Calu3 (cell line): ENCODE measurements at regions of chr7 and their contacts with region 1.

Region 1: DNA sequence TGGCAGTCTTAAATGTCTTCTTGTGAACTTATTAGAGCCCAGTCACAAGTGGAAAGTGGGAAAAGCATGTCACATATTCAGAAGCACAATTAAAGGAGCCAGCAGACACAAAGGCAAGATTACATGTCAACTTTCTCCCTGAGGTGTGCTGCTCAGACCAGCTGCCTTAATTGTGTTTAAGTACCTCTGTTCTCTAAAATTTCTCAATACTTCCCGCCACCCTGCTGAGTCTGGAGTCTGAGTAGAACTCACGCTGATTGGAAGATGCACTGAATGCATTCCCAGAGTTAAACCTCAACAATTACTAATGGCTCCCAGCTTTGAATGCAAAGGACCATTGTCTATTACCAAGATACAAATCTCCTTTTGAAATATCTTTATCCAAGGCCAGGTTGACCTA is 166.4 kb upstream of the COBL start:
- DNase-seq: no peak
- H3K4me3 Mint-ChIP-seq: no peak overlapping the region
- H3K27ac Mint-ChIP-seq: no peak overlapping the region
- H3K4me1 Mint-ChIP-seq: no peaks in the 10 kb centered on the region
- H3K27me3 Mint-ChIP-seq: peaks cover 9% of the 10 kb centered on the region
- CTCF ChIP-seq: no peak

Region 2: DNA sequence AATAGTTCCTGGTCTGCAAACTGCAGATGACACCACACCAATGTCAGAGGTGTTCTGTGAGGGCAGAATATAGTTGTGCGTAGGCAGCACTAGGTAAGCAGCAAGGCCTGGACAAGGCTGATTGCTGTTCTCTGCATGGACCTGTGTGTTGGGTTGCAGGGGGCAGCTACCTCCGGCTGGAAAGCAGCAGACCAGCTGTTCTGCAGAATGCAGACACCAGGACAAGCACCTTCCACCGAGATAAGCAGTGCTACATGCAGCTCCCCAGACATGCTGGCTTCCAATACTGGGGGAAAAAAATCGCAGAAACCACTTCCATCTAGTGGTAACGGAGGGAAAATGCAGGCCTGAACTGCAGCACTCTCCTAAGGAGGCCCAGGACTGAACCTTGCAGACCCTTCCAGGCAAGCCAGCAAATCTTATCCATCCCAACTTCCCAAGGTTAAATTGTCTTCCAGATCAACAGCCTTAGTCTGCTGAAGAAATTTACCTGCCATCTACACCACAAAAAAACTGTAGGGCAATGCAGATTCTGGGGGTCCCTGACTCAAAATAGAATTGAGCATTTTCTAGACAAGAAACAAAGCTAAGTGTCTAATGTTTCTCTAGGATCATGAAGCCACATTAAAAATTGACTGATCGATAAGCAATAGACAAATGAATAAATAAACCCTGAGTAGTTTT is 115.9 kb before region 1 on chr7:
- CTCF ChIA-PET with region 1: no interaction called
- intact Hi-C with region 1: no loop called
- DNase-seq: peak; percentile 76
- H3K4me3 Mint-ChIP-seq: no peak overlapping the region
- H3K27ac Mint-ChIP-seq: no peak overlapping the region
- H3K4me1 Mint-ChIP-seq: peaks cover 9% of the 10 kb centered on the region
- H3K27me3 Mint-ChIP-seq: peaks cover 13% of the 10 kb centered on the region
- CTCF ChIP-seq: peak; percentile 90

Region 3: GRCh38 chr7:51455948-51456347 is 27.0 kb before region 1 on chr7:
- CTCF ChIA-PET with region 1: no interaction called
- intact Hi-C with region 1: no loop called
- DNase-seq: no peak
- H3K4me3 Mint-ChIP-seq: no peak overlapping the region
- H3K27ac Mint-ChIP-seq: no peak overlapping the region
- H3K4me1 Mint-ChIP-seq: no peaks in the 10 kb centered on the region
- H3K27me3 Mint-ChIP-seq: peaks cover 33% of the 10 kb centered on the region
- CTCF ChIP-seq: no peak

Region 4: DNA sequence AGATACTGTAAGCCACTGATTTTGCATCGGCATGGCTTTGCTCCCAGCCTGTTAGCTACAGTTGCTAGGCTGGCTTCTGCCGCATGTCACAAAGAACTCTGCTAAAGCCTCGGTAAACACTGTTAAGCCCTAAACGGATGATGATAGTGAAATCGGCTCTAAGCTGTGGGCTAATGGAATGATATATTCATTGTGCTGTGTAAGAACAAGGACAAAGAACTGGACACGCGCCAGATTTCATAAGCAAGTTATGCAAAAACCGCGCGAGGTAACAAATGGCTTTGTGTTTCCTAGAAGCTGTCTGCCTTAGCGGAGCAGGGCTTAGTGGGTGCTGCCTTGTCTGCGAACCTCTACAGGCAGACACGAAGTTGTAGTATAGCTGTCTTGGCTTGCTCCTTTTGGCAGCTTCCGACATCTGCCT is 165.0 kb after region 1 on chr7:
- CTCF ChIA-PET with region 1: no interaction called
- intact Hi-C with region 1: loop called (anchors 5 kb)
- DNase-seq: peak; percentile 66
- H3K4me3 Mint-ChIP-seq: no peak overlapping the region
- H3K27ac Mint-ChIP-seq: no peak overlapping the region
- H3K4me1 Mint-ChIP-seq: peaks cover 10% of the 10 kb centered on the region
- H3K27me3 Mint-ChIP-seq: peaks cover 93% of the 10 kb centered on the region
- CTCF ChIP-seq: no peak